ENCODE measurements at regions of chr1 and their contacts with region 1.

Region 1: DNA sequence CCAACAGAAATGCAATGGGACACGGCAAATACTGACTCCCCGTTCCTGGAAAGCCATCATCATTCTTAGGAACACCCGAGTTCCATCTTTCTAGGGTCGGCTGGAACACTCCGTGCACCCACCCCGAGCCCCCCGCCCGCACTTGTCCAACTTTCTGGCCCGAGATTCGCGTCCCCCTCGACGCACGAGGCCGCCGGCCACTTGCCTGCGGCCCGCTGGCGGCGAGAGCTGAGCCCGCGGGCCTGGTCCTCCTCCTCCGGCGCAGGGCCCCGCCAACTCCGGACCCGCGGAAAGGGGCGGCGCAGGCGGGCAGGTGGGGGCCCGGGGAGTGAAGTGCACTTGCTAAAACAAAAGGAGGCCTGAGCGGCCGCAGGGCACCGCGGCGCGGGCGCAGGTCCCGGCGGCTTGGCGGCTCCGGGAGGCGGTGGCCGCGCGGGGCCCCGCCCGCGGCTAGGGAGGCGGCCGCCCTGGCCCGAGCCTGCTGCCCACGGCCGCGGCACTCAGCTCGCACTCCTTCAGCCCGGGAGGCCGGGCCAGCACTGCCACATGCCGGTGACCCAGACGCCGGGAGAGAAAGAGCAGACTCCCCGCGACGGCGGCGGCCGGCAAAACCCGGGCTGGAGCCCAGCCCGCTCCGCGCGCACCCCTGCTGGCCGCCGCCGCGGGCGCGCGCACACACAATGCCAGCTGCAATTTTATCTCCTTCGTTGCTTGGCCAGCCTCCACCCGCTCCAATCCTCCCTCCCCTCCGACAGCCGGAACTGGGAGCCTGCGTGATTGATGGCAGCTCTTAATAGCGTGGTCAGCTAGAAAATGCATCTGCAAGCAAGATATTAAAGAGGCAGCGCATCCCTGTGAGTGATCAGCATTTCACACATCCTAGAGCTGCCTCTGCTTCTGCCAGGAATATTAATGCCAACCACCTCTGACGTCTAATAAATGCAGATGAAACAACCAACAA is 114.3 kb downstream of the RERE start:
- H3K4me3 ChIP-seq: peak overlapping the region; percentile 65
- H3K27ac ChIP-seq: peak overlapping the region; percentile 91
- H3K4me1 ChIP-seq: peaks cover 34% of the 10 kb centered on the region
- CTCF ChIP-seq: no peak

Region 2: GRCh38 chr1:8671306-8671917 is 31.7 kb before region 1 on chr1:
- CTCF ChIA-PET with region 1: interaction called, 20 read pairs
- POLR2A ChIA-PET with region 1: interaction called, 6 read pairs
- H3K4me3 ChIP-seq: no peak overlapping the region
- H3K27ac ChIP-seq: no peak overlapping the region
- H3K4me1 ChIP-seq: peaks cover 35% of the 10 kb centered on the region
- CTCF ChIP-seq: peak; percentile 51; the same call in 1 of the 2 replicates

Region 3: DNA sequence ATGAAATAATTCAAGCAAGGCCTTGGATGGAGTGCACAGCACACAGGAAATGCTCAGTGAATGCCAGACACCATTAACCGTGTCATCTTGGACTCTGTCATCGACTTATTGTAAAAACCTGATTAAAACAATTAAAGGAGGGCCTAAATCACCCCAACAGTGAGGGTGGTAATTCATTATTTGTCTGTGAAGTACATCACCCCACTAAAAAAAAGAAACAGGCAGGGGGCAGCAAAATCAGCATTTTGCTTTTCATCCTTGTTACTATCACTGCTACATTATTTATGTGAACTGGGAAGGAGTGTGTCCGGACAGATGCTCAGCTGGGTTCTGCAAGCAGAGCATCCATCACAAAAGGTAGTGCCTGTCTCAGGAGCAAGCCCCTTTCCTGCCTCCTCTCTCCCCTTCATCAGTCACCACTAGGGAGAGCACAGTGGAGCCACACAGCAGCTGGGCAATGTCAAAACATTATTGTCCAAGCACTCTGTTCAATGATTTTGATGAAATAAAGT is 15.8 kb after region 1 on chr1:
- CTCF ChIA-PET with region 1: interaction called, 14 read pairs
- POLR2A ChIA-PET with region 1: interaction called, 5 read pairs
- H3K4me3 ChIP-seq: no peak overlapping the region
- H3K27ac ChIP-seq: no peak overlapping the region
- H3K4me1 ChIP-seq: peaks cover 21% of the 10 kb centered on the region
- CTCF ChIP-seq: peak; percentile 27

Measured in HEK293 (cell line).